ENCODE measurements at regions of chr18 and their contacts with region 1.

Region 1: GRCh38 chr18:59715966-59716369 is 18.7 kb upstream of the CCBE1 start:
- DNase-seq: peak; percentile 69
- H3K4me3 ChIP-seq: no peak overlapping the region
- CTCF ChIP-seq: peak; percentile 17

Region 2: GRCh38 chr18:59744271-59744721 is 28.3 kb after region 1 on chr18:
- CTCF ChIA-PET with region 1: interaction called, 5 read pairs
- POLR2A ChIA-PET with region 1: interaction called, 32 read pairs
- DNase-seq: peak; percentile 97
- H3K4me3 ChIP-seq: no peak overlapping the region
- CTCF ChIP-seq: no peak

Measured in AG04449 (cell line).